ENCODE measurements at regions of chr1 and their contacts with region 1.

Region 1: GRCh38 chr1:94045465-94046056 is 75.4 kb downstream of the ABCA4 start:
- DNase-seq: peak; percentile 90
- ATAC-seq: peak; percentile 85
- H3K4me3 Mint-ChIP-seq: peak overlapping the region; percentile 52
- H3K27ac Mint-ChIP-seq: no peak overlapping the region
- H3K4me1 Mint-ChIP-seq: peaks cover 30% of the 10 kb centered on the region
- H3K27me3 Mint-ChIP-seq: no peaks in the 10 kb centered on the region
- CTCF ChIP-seq: peak; percentile 46

Region 2: GRCh38 chr1:93993731-93994130 is 51.8 kb before region 1 on chr1:
- CTCF ChIA-PET with region 1: no interaction called
- POLR2A ChIA-PET with region 1: no interaction called
- DNase-seq: no peak
- ATAC-seq: no peak
- H3K4me3 Mint-ChIP-seq: no peak overlapping the region
- H3K27ac Mint-ChIP-seq: no peak overlapping the region
- H3K4me1 Mint-ChIP-seq: peaks cover 10% of the 10 kb centered on the region
- H3K27me3 Mint-ChIP-seq: no peaks in the 10 kb centered on the region; the same call in 1 of the 2 replicates
- CTCF ChIP-seq: no peak

Region 3: DNA sequence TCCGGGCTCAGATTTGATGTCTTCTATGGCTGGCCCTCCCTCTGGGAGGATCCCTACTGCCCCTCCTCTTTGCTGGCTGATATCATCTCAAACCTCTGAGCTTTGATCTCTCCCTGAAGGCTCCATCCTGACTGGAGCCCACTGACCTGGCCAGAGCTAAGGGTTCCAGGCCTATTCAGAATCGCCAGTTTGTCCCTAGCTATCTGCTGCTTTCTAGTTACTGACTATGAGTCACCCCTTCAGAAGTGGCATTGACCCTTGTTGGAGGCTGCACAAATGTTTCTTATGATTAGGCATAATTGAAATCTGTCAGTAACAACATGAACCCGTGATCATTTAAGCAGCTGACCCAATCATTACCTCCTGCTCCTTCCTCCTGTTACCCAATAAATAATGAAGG is 11.7 kb before region 1 on chr1:
- CTCF ChIA-PET with region 1: interaction called, 17 read pairs
- POLR2A ChIA-PET with region 1: no interaction called
- DNase-seq: no peak
- ATAC-seq: no peak
- H3K4me3 Mint-ChIP-seq: no peak overlapping the region
- H3K27ac Mint-ChIP-seq: no peak overlapping the region
- H3K4me1 Mint-ChIP-seq: peaks cover 15% of the 10 kb centered on the region
- H3K27me3 Mint-ChIP-seq: peaks cover 5% of the 10 kb centered on the region; the same call in 1 of the 2 replicates
- CTCF ChIP-seq: no peak

Region 4: DNA sequence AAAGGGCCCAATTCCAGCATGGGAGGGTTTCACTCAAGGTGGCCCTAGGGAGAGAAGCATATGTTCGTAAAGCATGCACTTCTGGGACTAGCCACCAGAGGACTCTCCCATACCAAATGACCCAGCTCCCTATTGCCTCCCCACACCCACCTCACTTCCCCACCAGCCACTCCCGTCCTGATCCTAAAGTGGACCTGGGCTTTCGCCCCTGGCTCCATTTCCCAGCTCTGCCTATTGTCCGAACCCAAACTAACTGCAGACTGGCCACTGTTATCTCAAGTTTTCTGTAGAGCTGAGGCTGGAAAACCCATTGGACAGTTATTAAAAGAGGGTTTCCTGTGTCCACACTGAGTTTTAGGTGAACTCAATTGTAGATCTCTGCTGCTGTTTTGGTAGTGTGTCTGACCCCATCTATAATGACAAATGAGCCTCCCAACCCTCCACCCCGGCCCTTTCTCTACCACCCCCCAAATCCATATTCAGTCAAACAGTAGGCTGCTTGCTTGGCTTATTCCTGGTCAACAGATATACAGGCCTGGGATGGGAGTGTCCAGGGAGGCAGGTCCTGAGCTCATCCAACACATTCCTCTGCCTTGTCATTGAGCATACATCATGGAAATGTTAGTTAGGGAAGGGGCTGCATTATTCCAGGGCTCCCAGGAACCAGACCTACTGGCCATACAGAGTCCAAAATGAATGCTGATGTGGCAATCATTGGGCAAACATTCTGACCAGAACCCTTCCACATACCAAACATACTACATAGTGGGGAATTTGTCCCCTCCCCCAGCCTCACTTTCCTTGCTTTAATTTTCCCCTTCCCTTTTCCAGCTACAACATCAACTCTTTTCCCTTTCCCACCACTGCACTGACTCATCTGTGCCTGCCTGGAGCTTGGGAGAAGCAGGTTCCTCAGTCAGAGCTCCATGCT is 16.2 kb after region 1 on chr1:
- CTCF ChIA-PET with region 1: interaction called, 30 read pairs
- POLR2A ChIA-PET with region 1: no interaction called
- DNase-seq: peak; percentile 78
- ATAC-seq: peak; percentile 97
- H3K4me3 Mint-ChIP-seq: no peak overlapping the region
- H3K27ac Mint-ChIP-seq: no peak overlapping the region
- H3K4me1 Mint-ChIP-seq: peaks cover 17% of the 10 kb centered on the region
- H3K27me3 Mint-ChIP-seq: peaks cover 35% of the 10 kb centered on the region
- CTCF ChIP-seq: peak; percentile 85

Region 5: DNA sequence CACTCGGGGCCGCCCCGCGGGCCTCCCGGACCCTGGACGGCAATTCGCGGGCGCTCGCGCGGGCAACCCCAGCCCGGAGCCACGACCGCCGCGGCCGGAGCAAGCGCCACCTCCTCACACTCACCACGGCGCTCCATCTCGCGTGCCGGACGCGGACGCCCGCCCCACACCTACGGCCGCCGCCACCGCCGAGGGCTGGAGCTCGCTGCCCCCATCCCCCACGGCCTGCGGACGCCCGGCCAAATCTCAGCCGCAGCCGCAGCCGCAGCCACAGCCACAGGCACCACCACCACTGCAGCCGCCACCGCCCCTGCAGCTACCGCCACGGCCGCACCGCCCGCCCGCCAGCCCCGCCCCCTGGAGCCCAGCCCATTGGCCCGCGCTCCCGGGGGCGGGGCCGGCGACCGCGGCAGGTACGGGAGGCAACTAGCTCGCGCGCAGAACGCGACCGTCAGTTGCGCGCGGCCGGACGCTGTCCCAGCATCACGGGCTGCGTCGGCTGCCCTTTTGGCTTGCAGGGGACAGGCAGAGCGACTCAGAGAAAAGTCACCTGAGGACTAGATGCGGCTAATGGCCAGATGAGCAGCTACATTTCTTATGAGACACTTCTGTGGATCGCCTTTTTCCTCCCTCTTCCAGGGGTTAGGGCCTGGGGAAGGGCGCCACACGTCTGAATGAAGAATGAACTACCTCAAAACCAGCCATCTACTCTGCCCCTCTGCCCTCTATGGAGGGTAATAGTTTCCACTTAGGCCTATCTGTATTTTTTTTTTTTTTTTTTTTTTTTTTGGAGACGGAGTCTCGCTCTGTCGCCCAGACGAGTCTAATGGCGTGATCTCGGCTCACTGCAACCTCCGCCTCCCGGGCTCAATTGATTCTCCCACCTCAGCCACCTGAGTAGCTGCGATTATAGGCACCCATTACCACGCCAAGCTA is 192.0 kb after region 1 on chr1 and contains the start of gene ARHGAP29:
- CTCF ChIA-PET with region 1: interaction called, 37 read pairs
- POLR2A ChIA-PET with region 1: interaction called, 4 read pairs
- DNase-seq: peak; percentile 92
- ATAC-seq: peak; percentile 89
- H3K4me3 Mint-ChIP-seq: peak within 1 kb of the TSS; percentile 79
- H3K27ac Mint-ChIP-seq: peak within 1 kb of the TSS; percentile 41; the same call in 1 of the 2 replicates
- H3K4me1 Mint-ChIP-seq: peaks cover 24% of the 10 kb centered on the region
- H3K27me3 Mint-ChIP-seq: peaks cover 65% of the 10 kb centered on the region
- CTCF ChIP-seq: no peak
- total RNA-seq, gene ARHGAP29: 3.5 to 6.6 TPM (median 4.4 TPM) in 3 replicates

Region 6: DNA sequence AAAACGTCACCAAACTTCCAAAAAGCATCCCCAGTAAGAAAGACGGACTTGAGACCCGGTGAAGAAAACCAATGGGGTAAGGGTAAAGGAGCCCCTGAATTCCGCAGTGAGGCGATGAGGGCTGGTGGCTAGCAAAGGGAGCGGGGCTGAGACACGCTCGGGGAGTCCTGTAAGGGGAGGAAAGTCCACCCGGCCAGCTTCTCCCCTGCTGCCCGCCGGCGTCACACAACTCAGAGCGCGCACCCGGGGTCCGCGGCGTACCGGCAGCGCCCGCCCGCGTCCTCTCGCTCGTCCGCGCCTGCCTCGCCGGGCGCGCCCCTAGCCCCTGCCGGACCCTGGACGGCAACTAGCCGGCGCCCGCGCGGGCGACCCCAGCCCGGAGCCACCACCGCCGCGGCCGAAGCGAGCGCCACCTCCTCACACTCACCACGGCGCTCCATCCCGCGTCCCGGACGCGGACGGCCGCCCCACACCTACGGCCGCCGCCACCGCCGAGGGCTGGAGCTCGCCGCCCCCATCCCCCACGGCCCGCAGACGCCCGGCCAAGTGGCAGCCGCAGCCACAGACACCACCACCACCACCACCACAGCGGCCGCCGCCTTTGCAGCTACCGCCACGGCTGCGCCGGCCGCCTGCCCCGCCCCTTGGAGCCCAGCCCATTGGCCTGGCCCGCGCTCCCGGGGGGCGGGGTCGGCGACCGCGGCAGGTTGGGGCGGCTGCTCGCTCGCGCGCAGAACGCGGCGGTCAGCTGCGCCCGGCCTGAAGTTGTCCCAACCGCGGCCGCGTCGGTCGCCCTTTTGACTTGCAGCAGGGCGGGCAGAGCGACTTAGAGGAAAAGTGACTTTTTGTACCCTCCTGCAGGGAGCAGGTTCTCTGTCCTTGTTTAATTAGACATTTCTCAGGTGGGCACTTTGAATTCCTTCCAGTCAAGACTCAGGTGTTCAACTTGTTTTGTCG is 201.9 kb after region 1 on chr1:
- CTCF ChIA-PET with region 1: interaction called, 12 read pairs
- POLR2A ChIA-PET with region 1: no interaction called
- DNase-seq: peak; percentile 90
- ATAC-seq: peak; percentile 95
- H3K4me3 Mint-ChIP-seq: peak overlapping the region; percentile 78
- H3K27ac Mint-ChIP-seq: no peak overlapping the region
- H3K4me1 Mint-ChIP-seq: peaks cover 10% of the 10 kb centered on the region
- H3K27me3 Mint-ChIP-seq: peaks cover 92% of the 10 kb centered on the region
- CTCF ChIP-seq: no peak

Region 7: DNA sequence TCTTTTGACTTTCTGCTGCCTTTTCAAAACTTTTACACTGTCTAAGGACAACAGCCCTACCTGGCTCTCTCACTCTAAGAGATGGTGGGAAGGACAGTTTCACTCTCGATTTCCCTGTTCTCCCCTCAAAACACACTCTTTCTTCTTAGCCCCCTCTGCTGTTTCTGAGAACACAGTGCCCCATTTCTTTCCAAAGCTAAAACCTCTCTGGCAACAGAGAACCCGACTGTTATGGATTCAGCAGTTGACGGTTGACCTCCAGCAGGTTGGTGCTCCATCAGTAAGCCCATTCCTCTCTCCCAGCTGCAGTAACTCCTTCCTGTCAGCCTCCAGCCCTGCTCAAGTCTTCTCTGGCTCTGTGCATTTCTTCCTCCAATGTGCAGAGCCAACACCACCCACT is 284.4 kb after region 1 on chr1:
- CTCF ChIA-PET with region 1: interaction called, 175 read pairs
- POLR2A ChIA-PET with region 1: interaction called, 3 read pairs
- DNase-seq: no peak
- ATAC-seq: peak; percentile 74
- H3K4me3 Mint-ChIP-seq: no peak overlapping the region
- H3K27ac Mint-ChIP-seq: no peak overlapping the region
- H3K4me1 Mint-ChIP-seq: peaks cover 52% of the 10 kb centered on the region
- H3K27me3 Mint-ChIP-seq: peaks cover 4% of the 10 kb centered on the region; the same call in 1 of the 2 replicates
- CTCF ChIP-seq: no peak

Measured in WTC11 (cell line).